Activated naive CD4-positive, alpha-beta T cell treated with anti-CD3 and anti-CD28 coated beads, Interleukin-2, amount 10 ng/mL, durations not matched to agents 7 days and 5 days (primary cell): ENCODE measurements at regions of chr3 and their contacts with region 1.

Region 1: DNA sequence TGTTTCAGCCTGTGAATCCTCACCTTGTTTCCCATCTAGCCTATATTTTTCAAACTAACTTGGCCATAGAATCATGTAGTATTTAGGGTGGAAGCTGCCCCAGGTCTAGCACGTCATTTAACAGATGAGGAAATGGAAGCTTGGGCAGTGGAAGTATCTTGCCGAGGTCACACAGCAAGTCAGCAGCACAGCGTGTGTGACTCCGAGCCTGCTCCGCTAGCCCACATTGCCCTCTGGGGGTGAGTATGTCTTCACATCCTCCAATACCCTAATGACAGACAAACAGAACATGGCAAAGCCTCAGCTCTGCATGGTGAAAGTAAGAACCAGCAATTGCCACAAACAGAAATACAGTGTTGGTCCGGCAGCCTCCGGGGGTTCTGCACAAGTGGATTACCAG is 2.2 kb upstream of the CCR5 start:
- DNase-seq: peak; percentile 80
- H3K4me3 Mint-ChIP-seq: no peak overlapping the region
- H3K27ac Mint-ChIP-seq: peak overlapping the region; percentile 55
- H3K4me1 Mint-ChIP-seq: peaks cover 69% of the 10 kb centered on the region
- H3K27me3 Mint-ChIP-seq: peaks cover 15% of the 10 kb centered on the region

Region 2: GRCh38 chr3:45688882-45689756 is 679.5 kb before region 1 on chr3 and contains the start of gene SACM1L:
- CTCF ChIA-PET with region 1: no interaction called
- DNase-seq: peak; percentile 98
- H3K4me3 Mint-ChIP-seq: peak within 1 kb of the TSS; percentile 85
- H3K27ac Mint-ChIP-seq: peak within 1 kb of the TSS; percentile 94
- H3K4me1 Mint-ChIP-seq: peaks cover 53% of the 10 kb centered on the region
- H3K27me3 Mint-ChIP-seq: peaks cover 6% of the 10 kb centered on the region

Region 3: GRCh38 chr3:46078712-46079400 is 289.7 kb before region 1 on chr3:
- CTCF ChIA-PET with region 1: interaction called, 92 read pairs
- DNase-seq: peak; percentile 94
- H3K4me3 Mint-ChIP-seq: no peak overlapping the region
- H3K27ac Mint-ChIP-seq: no peak overlapping the region
- H3K4me1 Mint-ChIP-seq: peaks cover 14% of the 10 kb centered on the region
- H3K27me3 Mint-ChIP-seq: peaks cover 15% of the 10 kb centered on the region

Region 4: DNA sequence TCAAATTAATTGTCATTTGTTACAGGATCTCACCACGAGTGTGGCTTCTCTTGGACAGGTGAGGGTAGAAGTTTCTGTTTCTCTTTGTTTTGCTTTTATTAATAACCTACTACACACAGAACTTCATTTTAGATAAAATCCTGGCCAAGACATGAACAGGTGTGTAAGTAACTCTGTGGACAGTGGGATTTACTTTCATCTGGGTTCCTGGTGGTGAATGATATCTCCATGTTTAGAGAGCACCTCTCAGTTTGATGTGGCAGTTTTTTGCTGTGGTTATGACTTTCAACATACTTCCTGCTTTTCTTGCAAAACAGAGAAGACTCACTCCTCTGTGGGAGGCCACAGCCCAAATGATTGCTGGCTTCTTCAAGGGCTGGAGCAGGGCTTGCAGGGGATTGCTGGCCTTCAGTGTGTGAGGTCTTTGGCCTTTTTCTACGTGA is 270.2 kb before region 1 on chr3:
- CTCF ChIA-PET with region 1: interaction called, 17 read pairs
- DNase-seq: peak; percentile 73
- H3K4me3 Mint-ChIP-seq: peak overlapping the region; percentile 16
- H3K27ac Mint-ChIP-seq: peak overlapping the region; percentile 94
- H3K4me1 Mint-ChIP-seq: peaks cover 62% of the 10 kb centered on the region
- H3K27me3 Mint-ChIP-seq: peaks cover 6% of the 10 kb centered on the region

Region 5: GRCh38 chr3:46266598-46266997 is 102.0 kb before region 1 on chr3:
- CTCF ChIA-PET with region 1: interaction called, 161 read pairs
- DNase-seq: no peak
- H3K4me3 Mint-ChIP-seq: no peak overlapping the region
- H3K27ac Mint-ChIP-seq: no peak overlapping the region
- H3K4me1 Mint-ChIP-seq: peaks cover 36% of the 10 kb centered on the region
- H3K27me3 Mint-ChIP-seq: peaks cover 18% of the 10 kb centered on the region

Region 6: DNA sequence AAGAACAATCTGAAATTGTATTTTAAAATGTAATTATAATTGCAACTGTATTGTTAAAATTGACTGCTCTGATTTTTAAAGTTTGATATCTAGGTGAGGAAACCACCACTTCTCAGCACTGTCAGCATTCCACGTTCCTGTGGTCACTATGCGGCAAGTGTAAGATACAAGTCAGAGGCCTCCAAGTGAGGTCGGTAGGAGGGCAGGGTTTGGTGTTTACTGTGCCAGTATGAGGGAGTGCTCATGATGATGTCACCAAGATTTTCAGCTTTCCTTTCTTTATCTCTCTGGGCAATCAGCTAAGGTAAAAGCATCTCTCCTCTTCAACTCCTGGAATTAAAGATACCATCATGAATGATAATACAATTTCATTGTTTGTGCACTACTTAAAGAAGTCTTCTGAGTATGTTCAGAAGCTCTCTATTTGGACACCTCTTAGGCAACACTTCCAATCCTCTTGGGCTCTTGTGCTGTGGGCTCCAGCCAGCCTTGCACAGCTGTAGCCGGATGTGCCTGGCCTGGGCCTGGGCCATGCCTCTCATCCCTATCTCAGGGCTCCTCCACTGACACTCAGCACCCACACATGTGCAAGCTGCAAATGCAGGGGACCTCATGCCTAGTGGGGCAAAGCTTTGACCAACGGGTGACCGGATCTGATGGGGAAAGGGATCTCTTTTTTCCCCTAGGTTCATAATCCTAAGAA is 83.4 kb before region 1 on chr3:
- CTCF ChIA-PET with region 1: interaction called, 36 read pairs
- DNase-seq: peak; percentile 64
- H3K4me3 Mint-ChIP-seq: no peak overlapping the region
- H3K27ac Mint-ChIP-seq: peak overlapping the region; percentile 93
- H3K4me1 Mint-ChIP-seq: peaks cover 84% of the 10 kb centered on the region
- H3K27me3 Mint-ChIP-seq: no peaks in the 10 kb centered on the region

Region 7: DNA sequence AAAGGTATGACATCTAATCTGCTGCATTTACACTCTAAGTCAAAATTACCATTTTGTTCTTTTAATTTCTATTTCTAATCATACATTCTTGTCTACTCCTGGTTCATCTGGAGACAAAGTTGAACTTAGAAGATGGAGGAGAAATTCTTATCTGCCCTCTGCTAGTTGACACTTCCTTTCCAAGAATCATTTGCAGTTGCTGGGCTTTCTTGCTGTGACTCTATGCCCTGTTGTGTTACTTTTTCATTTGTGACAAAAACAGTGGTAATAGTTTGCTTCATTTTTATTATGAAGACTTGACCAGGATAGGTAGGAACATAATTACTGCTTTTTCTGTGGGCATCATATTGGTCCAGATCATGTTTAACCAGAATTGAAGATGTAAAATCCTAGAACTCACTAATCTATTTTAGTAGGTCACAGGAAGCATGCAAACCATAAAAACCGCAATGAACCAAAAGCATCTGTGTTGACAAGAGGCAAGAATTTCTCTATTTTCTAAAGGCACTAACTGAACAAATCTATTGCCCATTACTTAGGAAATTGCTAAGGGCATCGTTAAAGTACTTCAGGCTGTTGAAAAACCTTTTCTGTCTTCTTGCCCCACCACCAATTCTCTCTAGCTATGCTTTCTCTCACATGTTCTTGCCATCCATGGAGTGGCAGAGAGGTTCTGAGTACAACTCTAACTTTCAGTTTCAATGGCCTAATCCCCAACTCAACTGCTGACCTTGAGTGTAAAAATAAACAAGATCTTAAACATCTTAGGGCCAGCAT is 18.9 kb before region 1 on chr3:
- CTCF ChIA-PET with region 1: interaction called, 80 read pairs
- DNase-seq: peak; percentile 30
- H3K4me3 Mint-ChIP-seq: peak overlapping the region; percentile 49
- H3K27ac Mint-ChIP-seq: peak overlapping the region; percentile 95
- H3K4me1 Mint-ChIP-seq: peaks cover 71% of the 10 kb centered on the region
- H3K27me3 Mint-ChIP-seq: peaks cover 3% of the 10 kb centered on the region